Tibial artery (tissue), 4 donors: ENCODE measurements at regions of chr14 and their contacts with region 1.

Region 1: DNA sequence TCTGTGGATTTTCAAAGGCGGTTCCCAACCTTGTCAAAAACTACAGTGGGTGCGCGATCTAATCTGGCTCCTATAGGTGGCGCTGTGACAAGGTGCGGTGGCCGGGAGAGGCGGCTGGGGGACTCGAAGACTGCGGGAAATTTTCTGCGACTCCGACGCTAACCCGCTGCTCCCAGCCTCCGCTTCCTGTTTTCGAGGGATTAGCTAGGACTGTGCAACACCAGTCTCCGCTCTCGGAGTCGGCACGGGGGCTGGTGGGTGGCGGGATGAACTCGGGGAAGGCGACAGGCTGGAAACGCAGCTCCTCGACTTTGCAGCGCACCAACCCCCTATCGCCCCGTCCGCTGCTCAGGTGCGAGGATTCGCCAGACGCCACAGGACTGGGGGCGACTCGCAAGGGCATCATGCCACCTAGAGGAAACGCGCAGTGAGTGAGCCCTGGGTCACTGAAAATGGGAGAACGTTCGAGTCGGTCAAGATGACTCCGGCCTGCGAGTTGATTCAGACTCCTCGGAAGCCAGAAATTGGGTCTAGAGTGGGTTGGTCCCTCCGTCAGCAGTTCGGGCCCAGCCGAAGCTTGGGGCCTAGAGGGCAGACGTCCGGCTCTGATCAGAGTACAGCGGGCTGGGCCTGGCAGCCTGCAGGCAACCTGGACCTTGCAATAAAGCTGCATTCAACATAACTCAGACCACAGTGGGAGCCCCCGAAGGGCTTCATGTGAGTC is 5.5 kb upstream of the PAX9 start:
- DNase-seq: no peak
- H3K4me3 ChIP-seq: no peak overlapping the region
- H3K27ac ChIP-seq: no peak overlapping the region
- H3K4me1 ChIP-seq: peaks cover 0 to 48% (median 33%) of the 10 kb centered on the region in 4 donors
- H3K27me3 ChIP-seq: peaks cover 22 to 100% of the 10 kb centered on the region in 2 donors
- CTCF ChIP-seq: peak; percentile 21 to 44

Region 2: GRCh38 chr14:35336494-35337268 is 1319.4 kb before region 1 on chr14:
- intact Hi-C with region 1: no loop called
- DNase-seq: peak; percentile 96 to 99
- H3K4me3 ChIP-seq: peak overlapping the region; percentile 0 to 15
- H3K27ac ChIP-seq: peak overlapping the region; percentile 83 to 98
- H3K4me1 ChIP-seq: peaks cover 5 to 88% (median 48%) of the 10 kb centered on the region in 4 donors
- H3K27me3 ChIP-seq: no peaks in the 10 kb centered on the region
- CTCF ChIP-seq: no peak

Region 3: DNA sequence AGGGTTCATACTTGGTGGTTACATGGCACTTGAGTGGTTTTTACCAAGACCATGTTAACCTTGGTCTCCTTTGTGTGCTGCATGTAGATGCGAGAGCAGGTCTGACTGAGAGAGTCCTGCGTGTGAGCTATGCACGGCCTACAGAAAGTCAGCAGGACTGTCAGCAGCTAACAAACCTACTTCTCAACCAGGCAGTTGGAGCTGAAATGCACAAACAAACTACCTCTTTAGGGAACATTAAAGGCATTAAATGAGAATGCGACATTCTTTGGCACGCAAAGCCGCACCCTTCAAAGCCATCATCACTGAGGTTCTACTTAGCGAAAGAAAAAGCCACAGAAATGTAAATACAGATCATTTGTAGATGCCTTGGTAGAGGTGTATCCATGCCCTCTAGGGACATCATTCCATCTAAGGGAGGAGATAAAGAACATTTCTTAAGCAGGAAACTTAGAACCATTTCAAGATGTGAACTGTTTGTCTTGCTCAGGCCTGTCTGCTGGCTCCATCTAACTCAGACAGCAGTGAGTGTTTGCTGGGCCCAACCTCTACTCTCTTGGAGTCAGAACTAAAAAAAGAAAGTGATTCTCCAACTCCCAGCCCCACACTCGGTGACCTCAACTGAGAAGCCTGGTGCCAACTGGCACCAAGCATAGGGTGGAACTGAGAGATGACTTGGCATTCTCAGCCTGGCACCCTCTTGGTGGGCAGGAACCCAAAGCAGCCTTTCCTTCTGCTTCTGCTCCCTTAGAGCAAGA is 272.3 kb before region 1 on chr14:
- intact Hi-C with region 1: no loop called
- DNase-seq: peak; percentile 55 to 91
- H3K4me3 ChIP-seq: no peak overlapping the region
- H3K27ac ChIP-seq: peak overlapping the region; percentile 68 to 71
- H3K4me1 ChIP-seq: peaks cover 0 to 15% (median 12%) of the 10 kb centered on the region in 4 donors
- H3K27me3 ChIP-seq: no peaks in the 10 kb centered on the region
- CTCF ChIP-seq: no peak

Region 4: GRCh38 chr14:36747411-36748184 is 91.5 kb after region 1 on chr14:
- intact Hi-C with region 1: no loop called
- DNase-seq: no peak
- H3K4me3 ChIP-seq: no peak overlapping the region
- H3K27ac ChIP-seq: no peak overlapping the region
- H3K4me1 ChIP-seq: no peaks in the 10 kb centered on the region
- H3K27me3 ChIP-seq: no peaks in the 10 kb centered on the region
- CTCF ChIP-seq: peak in 1 of 2 experiments; percentile 13

Region 5: DNA sequence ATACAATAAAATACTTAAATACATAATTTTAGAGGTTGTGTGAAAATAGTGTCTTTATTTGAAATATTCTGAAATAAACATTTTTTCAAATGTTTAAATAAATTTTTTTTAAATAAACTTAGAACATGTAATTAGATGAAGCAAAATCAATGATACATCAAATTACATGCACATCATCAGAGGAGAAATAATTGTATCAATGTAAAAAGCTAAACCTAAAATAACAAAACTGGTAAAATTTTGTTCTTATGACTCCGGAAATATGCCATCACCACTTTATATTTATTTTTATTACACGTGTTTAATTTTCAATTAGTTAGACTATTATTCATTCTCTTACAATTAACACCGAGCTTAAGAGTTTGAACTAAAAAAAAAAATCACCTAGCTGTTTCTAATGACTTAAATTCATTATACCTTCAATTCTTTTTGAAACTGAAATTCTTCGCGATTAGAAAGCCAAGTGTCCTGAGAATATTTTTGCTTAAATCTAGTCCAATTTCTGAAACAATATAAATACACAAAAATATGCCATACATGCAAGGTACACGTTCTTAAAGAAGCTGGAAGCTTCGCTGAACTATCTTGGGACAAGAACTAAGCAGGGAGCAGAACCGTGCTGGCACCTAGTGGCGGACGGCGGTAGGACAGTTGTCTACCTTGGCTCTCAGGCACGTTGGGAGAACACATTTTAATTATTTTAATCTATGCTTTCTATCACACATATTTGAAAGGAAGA is 285.8 kb after region 1 on chr14:
- intact Hi-C with region 1: loop called (anchors 10 kb)
- DNase-seq: peak; percentile 59 to 68
- H3K4me3 ChIP-seq: no peak overlapping the region
- H3K27ac ChIP-seq: no peak overlapping the region
- H3K4me1 ChIP-seq: no peaks in the 10 kb centered on the region
- H3K27me3 ChIP-seq: no peaks in the 10 kb centered on the region
- CTCF ChIP-seq: peak; percentile 72 to 94